Left ventricle myocardium inferior (tissue), 1 donor: ENCODE measurements at regions of chr5 and their contacts with region 1.

Region 1: GRCh38 chr5:159262859-159263567 is at the start of gene UBLCP1:
- DNase-seq: peak; percentile 80
- H3K4me3 ChIP-seq: peak within 1 kb of the TSS; percentile 89
- H3K27ac ChIP-seq: peak within 1 kb of the TSS; percentile 94
- H3K4me1 ChIP-seq: peaks cover 33% of the 10 kb centered on the region
- H3K27me3 ChIP-seq: no peaks in the 10 kb centered on the region
- CTCF ChIP-seq: no peak
- total RNA-seq, gene UBLCP1: 15.9 TPM

Region 2: GRCh38 chr5:159156426-159157238 is 106.4 kb before region 1 on chr5:
- intact Hi-C with region 1: loop called (anchors 10 kb)
- DNase-seq: no peak
- H3K4me3 ChIP-seq: no peak overlapping the region
- H3K27ac ChIP-seq: no peak overlapping the region
- H3K4me1 ChIP-seq: peaks cover 16% of the 10 kb centered on the region
- H3K27me3 ChIP-seq: no peaks in the 10 kb centered on the region
- CTCF ChIP-seq: peak; percentile 90

Region 3: GRCh38 chr5:159209438-159210305 is 53.3 kb before region 1 on chr5 and contains the start of gene RNF145:
- intact Hi-C with region 1: loop called (anchors 10 kb)
- DNase-seq: peak; percentile 88
- H3K4me3 ChIP-seq: peak within 1 kb of the TSS; percentile 93
- H3K27ac ChIP-seq: peak within 1 kb of the TSS; percentile 97
- H3K4me1 ChIP-seq: peaks cover 53% of the 10 kb centered on the region
- H3K27me3 ChIP-seq: no peaks in the 10 kb centered on the region
- CTCF ChIP-seq: no peak
- total RNA-seq, gene RNF145: 18.0 TPM